Calu3 (cell line): ENCODE measurements at regions of chr5 and their contacts with region 1.

Region 1: GRCh38 chr5:30040488-30041118 is 1152.9 kb upstream of the CDH6 start:
- DNase-seq: peak; percentile 37
- H3K4me3 Mint-ChIP-seq: no peak overlapping the region
- H3K27ac Mint-ChIP-seq: no peak overlapping the region
- H3K4me1 Mint-ChIP-seq: no peaks in the 10 kb centered on the region
- H3K27me3 Mint-ChIP-seq: no peaks in the 10 kb centered on the region
- CTCF ChIP-seq: peak; percentile 46

Region 2: DNA sequence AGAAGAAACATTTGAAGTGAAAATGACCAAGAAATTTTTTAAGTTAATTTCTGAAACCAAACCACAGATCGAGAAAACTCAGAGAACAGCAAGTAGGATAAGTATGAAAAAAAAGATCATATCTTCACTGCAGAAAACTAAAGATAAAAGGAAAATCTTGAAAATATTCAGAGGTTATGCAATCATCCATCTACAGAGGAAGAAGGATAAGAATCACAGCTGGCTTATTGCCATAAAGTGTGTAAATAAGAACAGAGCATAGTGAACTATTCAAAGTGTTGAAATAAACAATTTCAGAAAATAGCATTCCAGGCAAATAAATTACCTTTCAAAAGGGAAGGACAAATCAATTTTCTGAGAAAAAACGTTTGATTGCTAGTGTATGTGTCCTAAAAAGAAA is 38.8 kb before region 1 on chr5:
- CTCF ChIA-PET with region 1: no interaction called
- intact Hi-C with region 1: no loop called
- DNase-seq: no peak
- H3K4me3 Mint-ChIP-seq: no peak overlapping the region
- H3K27ac Mint-ChIP-seq: no peak overlapping the region
- H3K4me1 Mint-ChIP-seq: no peaks in the 10 kb centered on the region
- H3K27me3 Mint-ChIP-seq: no peaks in the 10 kb centered on the region
- CTCF ChIP-seq: no peak

Region 3: DNA sequence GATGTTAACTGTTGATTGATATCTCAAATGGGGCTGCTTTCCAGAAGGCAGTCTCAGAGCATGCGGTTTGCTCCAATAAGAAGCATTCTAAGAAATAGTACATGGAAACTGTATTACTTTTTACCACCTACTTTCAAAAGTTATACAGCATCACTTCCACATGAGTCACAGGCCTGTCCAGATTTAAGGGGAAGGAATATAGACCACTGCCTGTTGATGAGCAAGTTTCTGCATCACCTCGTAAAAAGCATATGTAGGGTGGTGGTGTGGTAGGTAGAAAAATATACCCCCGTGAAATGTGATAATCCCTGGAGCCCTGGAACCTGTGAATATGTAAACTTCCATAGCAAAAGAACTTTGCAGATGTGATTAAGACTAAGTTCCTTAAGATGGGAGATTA is 336.2 kb after region 1 on chr5:
- CTCF ChIA-PET with region 1: no interaction called
- intact Hi-C with region 1: loop called (anchors 10 kb)
- DNase-seq: no peak
- H3K4me3 Mint-ChIP-seq: no peak overlapping the region
- H3K27ac Mint-ChIP-seq: no peak overlapping the region
- H3K4me1 Mint-ChIP-seq: no peaks in the 10 kb centered on the region
- H3K27me3 Mint-ChIP-seq: no peaks in the 10 kb centered on the region
- CTCF ChIP-seq: no peak

Region 4: GRCh38 chr5:31270396-31270795 is 1229.8 kb after region 1 on chr5:
- CTCF ChIA-PET with region 1: no interaction called
- intact Hi-C with region 1: loop called (anchors 1 kb)
- DNase-seq: peak; percentile 19
- H3K4me3 Mint-ChIP-seq: no peak overlapping the region
- H3K27ac Mint-ChIP-seq: no peak overlapping the region
- H3K4me1 Mint-ChIP-seq: peaks cover 22% of the 10 kb centered on the region
- H3K27me3 Mint-ChIP-seq: no peaks in the 10 kb centered on the region
- CTCF ChIP-seq: no peak